ENCODE measurements at regions of chr2 and their contacts with region 1.

Region 1: DNA sequence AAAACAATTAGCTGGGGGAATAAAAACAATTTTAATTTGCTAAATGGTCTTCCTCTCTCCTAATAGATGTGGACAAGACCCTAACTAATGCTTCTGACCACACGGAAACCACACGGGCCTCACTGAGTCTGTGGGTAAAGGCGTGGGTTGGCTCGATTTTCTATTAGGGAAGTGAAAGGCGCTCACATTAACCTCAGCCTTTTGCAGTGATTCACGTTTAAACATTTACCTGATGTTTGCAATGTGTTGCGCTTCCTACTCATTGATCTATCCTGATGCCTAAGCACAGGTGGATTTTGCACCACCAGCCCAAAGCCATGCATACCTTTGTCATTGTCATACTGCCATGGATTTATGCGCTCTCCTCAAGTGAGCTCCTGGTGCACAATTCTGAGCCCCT is 35.6 kb upstream of the NRP2 start:
- DNase-seq: no peak
- H3K4me3 ChIP-seq: no peak overlapping the region
- H3K27ac ChIP-seq: no peak overlapping the region
- H3K4me1 ChIP-seq: no peaks in the 10 kb centered on the region
- H3K27me3 ChIP-seq: no peaks in the 10 kb centered on the region
- CTCF ChIP-seq: no peak
- POLR2A ChIP-seq: no peak

Region 2: DNA sequence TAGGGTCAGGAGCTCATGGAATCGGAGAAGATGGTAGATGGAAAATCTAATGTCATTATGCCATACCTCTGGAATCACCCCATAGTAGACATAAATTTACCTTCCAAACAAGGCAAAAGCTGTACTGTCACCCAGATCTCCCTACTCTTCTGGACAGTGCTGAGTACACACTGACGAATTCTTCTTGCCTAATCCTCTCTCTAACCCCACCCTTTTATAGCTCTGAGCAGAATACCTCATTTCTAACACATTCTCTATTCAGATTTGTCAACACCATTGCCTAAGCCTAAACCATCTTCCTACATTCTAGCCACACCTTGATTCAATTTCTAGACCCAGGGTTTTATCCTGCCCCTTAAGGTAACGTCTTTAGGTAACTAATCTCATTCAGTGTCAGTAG is 285.4 kb before region 1 on chr2:
- intact Hi-C with region 1: loop called (anchors 10 kb)
- DNase-seq: no peak
- H3K4me3 ChIP-seq: no peak overlapping the region
- H3K27ac ChIP-seq: no peak overlapping the region
- H3K4me1 ChIP-seq: no peaks in the 10 kb centered on the region
- H3K27me3 ChIP-seq: no peaks in the 10 kb centered on the region
- CTCF ChIP-seq: no peak
- POLR2A ChIP-seq: no peak

Region 3: GRCh38 chr2:205585449-205586383 is 61.0 kb before region 1 on chr2:
- intact Hi-C with region 1: no loop called
- DNase-seq: no peak
- H3K4me3 ChIP-seq: no peak overlapping the region
- H3K27ac ChIP-seq: no peak overlapping the region
- H3K4me1 ChIP-seq: no peaks in the 10 kb centered on the region
- H3K27me3 ChIP-seq: no peaks in the 10 kb centered on the region
- CTCF ChIP-seq: no peak
- POLR2A ChIP-seq: no peak